K562 (cell line): ENCODE measurements at regions of chr6 and their contacts with region 1.

Region 1: GRCh38 chr6:30914076-30914853 is at the start of gene VARS2:
- DNase-seq: peak; percentile 96 to 100 (median 99)
- ATAC-seq: peak; percentile 96
- H3K4me3 ChIP-seq: peak within 1 kb of the TSS; percentile 55
- H3K27ac ChIP-seq: peak within 1 kb of the TSS; percentile 89
- H3K4me1 ChIP-seq: peaks cover 16 to 28% of the 10 kb centered on the region in 2 experiments
- H3K27me3 ChIP-seq: no peaks in the 10 kb centered on the region
- CTCF ChIP-seq: peak; percentile 58 to 68 (median 59); a peak in 5 of 6 replicates
- EP300 ChIP-seq: peak; percentile 30; the same call in 1 of the 2 replicates
- POLR2A ChIP-seq: peak; percentile 88
- RAD21 ChIP-seq: peak; percentile 50 to 61
- polyA plus RNA-seq, gene VARS2: 1.6 to 2.3 TPM

Region 2: GRCh38 chr6:30877419-30878371 is 36.6 kb before region 1 on chr6:
- CTCF ChIA-PET with region 1: no interaction called
- POLR2A ChIA-PET with region 1: interaction called, 4 read pairs
- in situ Hi-C with region 1: no loop called
- intact Hi-C with region 1: loop called (anchors 2 kb)
- DNase-seq: peak; percentile 75 to 97 (median 82)
- ATAC-seq: peak; percentile 78
- H3K4me3 ChIP-seq: peak overlapping the region; percentile 2; the same call in 1 of the 2 replicates
- H3K27ac ChIP-seq: peak overlapping the region; percentile 94
- H3K4me1 ChIP-seq: peaks cover 65 to 70% of the 10 kb centered on the region in 2 experiments
- H3K27me3 ChIP-seq: no peaks in the 10 kb centered on the region
- CTCF ChIP-seq: peak; percentile 96 to 99 (median 98)
- EP300 ChIP-seq: peak; percentile 70
- POLR2A ChIP-seq: no peak
- RAD21 ChIP-seq: peak; percentile 98 to 99

Region 3: GRCh38 chr6:30955367-30956042 is 41.2 kb after region 1 on chr6:
- CTCF ChIA-PET with region 1: no interaction called
- POLR2A ChIA-PET with region 1: interaction called, 5 read pairs
- in situ Hi-C with region 1: no loop called
- intact Hi-C with region 1: loop called (anchors 1 kb)
- DNase-seq: peak; percentile 89 to 92 (median 90)
- ATAC-seq: peak; percentile 99
- H3K4me3 ChIP-seq: peak overlapping the region; percentile 37
- H3K27ac ChIP-seq: no peak overlapping the region
- H3K4me1 ChIP-seq: peaks cover 8 to 15% of the 10 kb centered on the region in 2 experiments
- H3K27me3 ChIP-seq: peaks cover 18 to 62% of the 10 kb centered on the region in 2 experiments; a peak in 4 of 5 replicates
- CTCF ChIP-seq: 0 out of 6 replicates have a peak, but pooled peaks of 1 of the 3 experiments have one; percentile 2
- EP300 ChIP-seq: peak; percentile 55; the same call in 1 of the 2 replicates
- POLR2A ChIP-seq: peak; percentile 74
- RAD21 ChIP-seq: peak in 1 of 2 experiments; percentile 25; a peak in 2 of 4 replicates

Region 4: DNA sequence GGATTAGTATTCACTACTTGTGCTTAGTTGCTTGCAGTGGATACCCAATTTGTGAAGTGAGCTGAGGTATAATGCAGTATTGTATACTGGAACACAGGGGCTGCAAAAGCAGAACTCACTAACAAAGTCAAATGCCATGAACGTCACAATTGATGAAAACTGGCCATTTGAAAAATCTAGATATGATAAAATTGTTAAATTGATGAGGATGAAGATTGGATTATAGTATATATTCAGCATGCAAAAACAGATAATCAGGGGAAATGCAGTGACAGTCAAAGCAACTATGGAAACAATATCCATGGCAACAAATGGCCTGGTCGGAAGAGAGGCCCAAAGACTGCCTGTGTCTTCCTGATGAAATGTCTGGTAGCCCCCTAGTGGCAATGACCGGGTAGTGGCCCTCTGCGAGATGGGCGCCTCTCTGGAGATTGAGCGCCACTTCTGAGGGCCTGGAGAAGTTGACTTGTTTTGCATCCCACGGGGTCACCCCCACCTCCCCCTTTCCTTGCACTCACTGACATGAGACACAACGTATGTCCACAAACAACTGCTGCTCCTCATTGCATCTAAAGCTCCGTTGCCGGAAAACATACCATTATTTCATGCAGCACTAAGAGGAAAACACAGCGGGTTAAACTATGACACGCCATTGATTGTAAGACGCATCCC is 154.5 kb after region 1 on chr6:
- CTCF ChIA-PET with region 1: interaction called, 26 read pairs
- POLR2A ChIA-PET with region 1: interaction called, 3 read pairs
- in situ Hi-C with region 1: no loop called
- intact Hi-C with region 1: loop called (anchors 1 kb)
- DNase-seq: peak; percentile 84 to 87 (median 85)
- ATAC-seq: peak; percentile 99
- H3K4me3 ChIP-seq: no peak overlapping the region
- H3K27ac ChIP-seq: no peak overlapping the region
- H3K4me1 ChIP-seq: peaks cover 0 to 3% of the 10 kb centered on the region in 2 experiments; a peak in 2 of 5 replicates
- H3K27me3 ChIP-seq: peaks cover 0 to 6% of the 10 kb centered on the region in 2 experiments; a peak in 2 of 5 replicates
- CTCF ChIP-seq: peak; percentile 93 to 98 (median 95)
- EP300 ChIP-seq: no peak
- POLR2A ChIP-seq: no peak
- RAD21 ChIP-seq: peak; percentile 57 to 79

Region 5: DNA sequence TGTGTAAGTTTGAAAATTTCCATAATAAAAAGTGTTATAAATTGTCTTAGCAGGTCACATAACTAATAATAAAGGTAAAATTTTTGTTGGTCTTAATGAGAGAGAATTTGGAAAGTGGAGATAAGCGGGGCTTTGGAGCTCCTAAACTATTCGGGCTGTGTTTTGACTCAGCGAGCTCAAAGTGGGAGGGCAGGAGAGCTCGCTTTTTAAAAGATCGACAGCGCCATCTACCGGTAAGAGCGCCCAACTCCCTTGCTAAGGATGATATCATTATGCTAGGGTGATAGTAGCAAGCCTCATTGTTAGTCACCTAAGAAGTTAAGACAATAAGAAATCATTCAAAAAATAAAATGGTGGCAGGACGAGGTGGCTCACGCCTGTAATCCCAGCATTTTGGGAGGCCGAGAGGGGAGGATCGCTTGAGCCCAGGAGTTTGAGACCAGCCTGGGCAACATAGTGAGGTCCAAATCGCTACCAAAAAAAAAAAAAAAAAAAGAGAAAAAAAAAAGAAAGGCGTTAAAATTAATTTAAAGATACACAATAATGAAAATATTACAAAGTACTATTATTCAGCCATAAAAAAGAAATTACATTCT is 173.3 kb after region 1 on chr6:
- CTCF ChIA-PET with region 1: interaction called, 19 read pairs
- POLR2A ChIA-PET with region 1: interaction called, 4 read pairs
- in situ Hi-C with region 1: no loop called
- intact Hi-C with region 1: loop called (anchors 1 kb)
- DNase-seq: peak; percentile 87 to 93 (median 88)
- ATAC-seq: peak; percentile 94
- H3K4me3 ChIP-seq: no peak overlapping the region
- H3K27ac ChIP-seq: no peak overlapping the region
- H3K4me1 ChIP-seq: peaks cover 8 to 20% of the 10 kb centered on the region in 2 experiments
- H3K27me3 ChIP-seq: no peaks in the 10 kb centered on the region; a peak in 1 of 5 replicates
- CTCF ChIP-seq: peak; percentile 80 to 93 (median 90)
- EP300 ChIP-seq: no peak
- POLR2A ChIP-seq: no peak
- RAD21 ChIP-seq: peak; percentile 83 to 88